B cell (primary cell): ENCODE measurements at regions of chr17 and their contacts with region 1.

Region 1: GRCh38 chr17:39621523-39622379 is 5.0 kb upstream of the PPP1R1B start:
- DNase-seq: peak; percentile 92
- ATAC-seq: peak; percentile 76
- H3K4me3 ChIP-seq: peak overlapping the region in 4 of 5 experiments; percentile 14 to 38 (median 29)
- H3K4me3 Mint-ChIP-seq: peak overlapping the region; percentile 84
- H3K27ac ChIP-seq: no peak overlapping the region
- H3K27ac Mint-ChIP-seq: peak overlapping the region; percentile 75
- H3K4me1 ChIP-seq: peaks cover 31 to 51% of the 10 kb centered on the region in 2 donors
- H3K4me1 Mint-ChIP-seq: peaks cover 32% of the 10 kb centered on the region
- H3K27me3 ChIP-seq: peaks cover 0 to 29% (median 9%) of the 10 kb centered on the region in 4 experiments
- H3K27me3 Mint-ChIP-seq: peaks cover 7% of the 10 kb centered on the region
- CTCF ChIP-seq: peak; percentile 100

Region 2: DNA sequence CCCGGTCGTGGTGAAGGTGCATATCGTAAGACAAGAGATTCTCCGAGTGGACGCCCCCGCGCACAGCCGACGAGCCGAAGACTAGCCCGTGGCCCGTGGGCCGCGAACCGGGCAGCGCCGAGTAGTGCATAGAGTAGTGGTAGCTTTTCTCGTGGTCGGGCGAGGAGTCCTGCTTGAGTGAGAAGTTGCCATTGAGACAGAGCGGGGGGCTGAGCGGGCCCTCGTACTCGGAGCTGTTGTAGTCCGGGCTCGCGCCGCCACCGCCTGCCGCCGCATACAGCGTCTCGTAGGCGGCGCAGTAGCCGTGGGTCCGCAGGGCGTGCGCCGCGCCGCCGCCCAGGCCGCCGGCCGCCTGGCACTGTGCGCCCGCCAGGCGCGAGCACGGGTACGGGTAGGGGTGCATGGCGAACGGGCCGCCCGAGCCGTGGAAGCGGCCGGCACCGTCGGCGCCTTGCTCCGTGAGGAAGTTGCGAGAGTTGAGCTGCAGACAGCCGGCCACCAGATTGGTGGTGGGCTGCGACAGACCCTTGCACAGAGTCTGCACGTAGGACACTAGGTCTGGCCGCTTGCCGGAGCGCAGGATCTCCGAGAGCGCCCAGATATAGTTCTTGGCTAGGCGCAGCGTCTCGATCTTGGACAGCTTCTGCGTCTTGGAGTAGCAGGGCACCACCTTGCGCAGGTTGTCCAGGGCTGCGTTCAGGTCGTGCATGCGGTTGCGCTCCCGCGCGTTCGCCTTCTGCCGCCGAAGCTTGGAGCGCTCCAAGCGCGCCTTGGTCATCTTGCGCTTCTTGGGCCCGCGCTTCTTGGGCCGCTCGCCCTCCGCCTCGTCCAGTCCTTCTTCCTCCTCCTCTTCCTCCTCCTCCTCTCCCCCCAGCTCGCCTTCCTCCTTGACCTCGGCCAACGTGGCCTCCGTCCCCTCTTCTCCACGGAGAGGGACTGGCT is 16.0 kb before region 1 on chr17:
- CTCF ChIA-PET with region 1: interaction called, 30 read pairs
- POLR2A ChIA-PET with region 1: interaction called, 3 read pairs
- intact Hi-C with region 1: no loop called
- DNase-seq: peak; percentile 72
- ATAC-seq: peak; percentile 11
- H3K4me3 ChIP-seq: peak overlapping the region in 2 of 5 experiments; percentile 21 to 39
- H3K4me3 Mint-ChIP-seq: peak overlapping the region; percentile 78
- H3K27ac ChIP-seq: no peak overlapping the region
- H3K27ac Mint-ChIP-seq: no peak overlapping the region
- H3K4me1 ChIP-seq: peaks cover 44 to 47% of the 10 kb centered on the region in 2 donors
- H3K4me1 Mint-ChIP-seq: peaks cover 32% of the 10 kb centered on the region
- H3K27me3 ChIP-seq: peaks cover 0 to 86% (median 68%) of the 10 kb centered on the region in 4 experiments
- H3K27me3 Mint-ChIP-seq: peaks cover 58% of the 10 kb centered on the region
- CTCF ChIP-seq: no peak

Region 3: GRCh38 chr17:39668199-39668966 is 46.6 kb after region 1 on chr17 and contains the start of gene PNMT:
- CTCF ChIA-PET with region 1: interaction called, 109 read pairs
- POLR2A ChIA-PET with region 1: interaction called, 3 read pairs
- intact Hi-C with region 1: loop called (anchors 1 kb)
- DNase-seq: peak; percentile 82
- ATAC-seq: peak; percentile 76
- H3K4me3 ChIP-seq: peak within 1 kb of the TSS in 4 of 5 experiments; percentile 28 to 62 (median 53)
- H3K4me3 Mint-ChIP-seq: peak within 1 kb of the TSS; percentile 75
- H3K27ac ChIP-seq: no peak within 1 kb of the TSS
- H3K27ac Mint-ChIP-seq: peak within 1 kb of the TSS; percentile 7
- H3K4me1 ChIP-seq: peaks cover 24 to 36% of the 10 kb centered on the region in 2 donors
- H3K4me1 Mint-ChIP-seq: peaks cover 27% of the 10 kb centered on the region
- H3K27me3 ChIP-seq: peaks cover 0 to 37% (median 7%) of the 10 kb centered on the region in 4 experiments
- H3K27me3 Mint-ChIP-seq: peaks cover 23% of the 10 kb centered on the region
- CTCF ChIP-seq: peak; percentile 79
- total RNA-seq, gene PNMT: 0.39 and 0.76 TPM in 2 replicates

Region 4: GRCh38 chr17:39754161-39754951 is 132.6 kb after region 1 on chr17:
- CTCF ChIA-PET with region 1: interaction called, 23 read pairs
- POLR2A ChIA-PET with region 1: interaction called, 3 read pairs
- intact Hi-C with region 1: loop called (anchors 1 kb)
- DNase-seq: peak; percentile 99
- ATAC-seq: peak; percentile 67
- H3K4me3 ChIP-seq: peak overlapping the region in 4 of 5 experiments; percentile 46 to 63 (median 56)
- H3K4me3 Mint-ChIP-seq: peak overlapping the region; percentile 86
- H3K27ac ChIP-seq: peak overlapping the region; percentile 100
- H3K27ac Mint-ChIP-seq: peak overlapping the region; percentile 97
- H3K4me1 ChIP-seq: peaks cover 57 to 60% of the 10 kb centered on the region in 2 donors
- H3K4me1 Mint-ChIP-seq: peaks cover 63% of the 10 kb centered on the region
- H3K27me3 ChIP-seq: no peaks in the 10 kb centered on the region
- H3K27me3 Mint-ChIP-seq: no peaks in the 10 kb centered on the region
- CTCF ChIP-seq: peak; percentile 93

Region 5: GRCh38 chr17:39872751-39873150 is 251.0 kb after region 1 on chr17:
- CTCF ChIA-PET with region 1: interaction called, 16 read pairs
- POLR2A ChIA-PET with region 1: no interaction called
- intact Hi-C with region 1: no loop called
- DNase-seq: peak; percentile 56
- ATAC-seq: peak; percentile 31
- H3K4me3 ChIP-seq: peak overlapping the region in 2 of 5 experiments; percentile 2 to 6
- H3K4me3 Mint-ChIP-seq: peak overlapping the region; percentile 67
- H3K27ac ChIP-seq: peak overlapping the region in 1 of 2 donors; percentile 36
- H3K27ac Mint-ChIP-seq: peak overlapping the region; percentile 50
- H3K4me1 ChIP-seq: peaks cover 31 to 45% of the 10 kb centered on the region in 2 donors
- H3K4me1 Mint-ChIP-seq: peaks cover 44% of the 10 kb centered on the region
- H3K27me3 ChIP-seq: no peaks in the 10 kb centered on the region
- H3K27me3 Mint-ChIP-seq: no peaks in the 10 kb centered on the region
- CTCF ChIP-seq: peak; percentile 82

Region 6: GRCh38 chr17:40026816-40027613 is 405.3 kb after region 1 on chr17:
- CTCF ChIA-PET with region 1: interaction called, 18 read pairs
- POLR2A ChIA-PET with region 1: no interaction called
- intact Hi-C with region 1: loop called (anchors 1 kb)
- DNase-seq: peak; percentile 85
- ATAC-seq: peak; percentile 92
- H3K4me3 ChIP-seq: no peak overlapping the region
- H3K4me3 Mint-ChIP-seq: no peak overlapping the region
- H3K27ac ChIP-seq: no peak overlapping the region
- H3K27ac Mint-ChIP-seq: no peak overlapping the region
- H3K4me1 ChIP-seq: peaks cover 0 to 5% of the 10 kb centered on the region in 2 donors
- H3K4me1 Mint-ChIP-seq: peaks cover 4% of the 10 kb centered on the region
- H3K27me3 ChIP-seq: no peaks in the 10 kb centered on the region
- H3K27me3 Mint-ChIP-seq: no peaks in the 10 kb centered on the region
- CTCF ChIP-seq: peak; percentile 94